Astrocyte of the spinal cord (primary cell): ENCODE measurements at regions of chr9 and their contacts with region 1.

Region 1: DNA sequence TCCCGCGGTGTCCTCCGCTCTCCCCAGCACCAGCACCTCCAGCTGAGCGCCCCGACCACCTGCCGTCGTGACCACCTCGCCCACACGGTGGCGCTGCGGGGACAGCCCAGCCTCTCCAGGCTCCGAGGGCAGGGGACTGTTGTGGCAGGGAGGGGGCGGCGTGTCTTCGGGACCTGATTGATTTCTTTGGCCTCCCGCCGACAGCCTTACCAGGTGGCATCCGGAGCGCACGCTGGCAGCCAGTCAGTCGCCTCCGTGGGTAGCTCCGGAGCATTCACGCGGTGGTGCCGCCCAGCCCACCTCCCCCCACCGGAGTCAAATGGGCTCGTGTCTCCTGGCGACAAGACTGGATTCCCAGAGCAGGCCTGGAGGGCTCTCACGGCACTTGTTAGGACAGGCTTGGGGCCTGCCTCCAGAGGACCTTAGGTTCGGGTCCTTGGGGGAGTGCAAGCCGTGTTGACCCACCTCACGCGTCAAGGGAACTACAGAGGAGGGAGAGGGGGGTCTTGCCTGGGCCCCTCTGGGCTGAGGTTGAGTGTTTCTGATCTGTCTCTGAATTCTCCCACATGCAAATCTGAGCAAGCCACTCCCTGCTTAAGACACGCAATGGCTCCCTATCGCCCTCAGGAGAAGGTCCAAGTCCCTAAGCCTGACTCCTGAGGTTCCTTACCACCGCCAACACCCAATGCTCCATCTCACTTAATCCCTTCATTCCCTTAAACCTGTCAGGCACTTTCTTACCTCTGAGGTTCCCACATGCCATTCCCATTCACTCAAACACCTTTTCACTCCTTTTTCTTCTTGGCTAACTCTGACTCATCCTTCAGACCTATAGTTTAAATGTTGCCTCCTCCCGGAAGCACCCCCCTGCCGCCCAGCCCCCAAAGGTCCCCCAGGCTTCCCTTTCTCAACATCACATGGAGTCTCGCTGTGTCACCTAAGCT is 51.2 kb upstream of the GGTA1 start:
- DNase-seq: peak; percentile 55
- H3K4me3 ChIP-seq: peak overlapping the region; percentile 18
- CTCF ChIP-seq: peak; percentile 86

Region 2: DNA sequence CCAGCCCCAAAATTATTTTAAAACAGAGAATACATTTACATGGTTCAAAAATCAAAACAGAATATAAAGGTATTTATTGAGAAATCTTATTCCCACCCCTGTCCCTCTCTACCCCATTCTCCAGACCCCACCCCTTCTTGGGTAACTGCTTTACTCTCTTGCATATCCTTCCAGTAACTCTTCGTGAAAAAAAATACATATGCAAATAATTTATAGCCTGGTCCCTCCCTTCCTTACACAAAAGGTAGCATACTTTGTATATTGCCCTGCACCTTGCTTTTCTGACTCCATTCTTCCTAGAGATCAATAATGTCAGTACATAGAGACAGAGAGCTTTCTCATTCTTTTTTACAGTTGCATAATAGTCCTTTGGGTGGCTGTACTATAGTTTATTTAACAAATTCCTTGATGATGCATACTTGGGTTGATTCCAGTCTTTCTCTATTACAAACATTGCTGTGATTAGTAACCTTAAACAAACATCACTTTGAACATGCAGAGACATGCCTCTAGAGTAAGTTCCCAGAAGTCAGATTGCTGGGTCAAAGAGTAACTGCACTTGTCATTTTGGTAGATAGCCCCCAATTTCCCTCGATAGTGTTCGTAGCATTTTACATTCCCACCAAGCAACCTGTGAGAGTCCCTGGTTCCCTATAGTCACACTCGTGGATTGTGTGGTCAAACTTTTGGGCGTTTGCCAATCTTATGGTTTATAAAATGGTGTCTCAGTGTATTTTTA is 228.6 kb before region 1 on chr9:
- in situ Hi-C with region 1: no loop called
- DNase-seq: peak; percentile 95
- H3K4me3 ChIP-seq: no peak overlapping the region
- CTCF ChIP-seq: no peak

Region 3: DNA sequence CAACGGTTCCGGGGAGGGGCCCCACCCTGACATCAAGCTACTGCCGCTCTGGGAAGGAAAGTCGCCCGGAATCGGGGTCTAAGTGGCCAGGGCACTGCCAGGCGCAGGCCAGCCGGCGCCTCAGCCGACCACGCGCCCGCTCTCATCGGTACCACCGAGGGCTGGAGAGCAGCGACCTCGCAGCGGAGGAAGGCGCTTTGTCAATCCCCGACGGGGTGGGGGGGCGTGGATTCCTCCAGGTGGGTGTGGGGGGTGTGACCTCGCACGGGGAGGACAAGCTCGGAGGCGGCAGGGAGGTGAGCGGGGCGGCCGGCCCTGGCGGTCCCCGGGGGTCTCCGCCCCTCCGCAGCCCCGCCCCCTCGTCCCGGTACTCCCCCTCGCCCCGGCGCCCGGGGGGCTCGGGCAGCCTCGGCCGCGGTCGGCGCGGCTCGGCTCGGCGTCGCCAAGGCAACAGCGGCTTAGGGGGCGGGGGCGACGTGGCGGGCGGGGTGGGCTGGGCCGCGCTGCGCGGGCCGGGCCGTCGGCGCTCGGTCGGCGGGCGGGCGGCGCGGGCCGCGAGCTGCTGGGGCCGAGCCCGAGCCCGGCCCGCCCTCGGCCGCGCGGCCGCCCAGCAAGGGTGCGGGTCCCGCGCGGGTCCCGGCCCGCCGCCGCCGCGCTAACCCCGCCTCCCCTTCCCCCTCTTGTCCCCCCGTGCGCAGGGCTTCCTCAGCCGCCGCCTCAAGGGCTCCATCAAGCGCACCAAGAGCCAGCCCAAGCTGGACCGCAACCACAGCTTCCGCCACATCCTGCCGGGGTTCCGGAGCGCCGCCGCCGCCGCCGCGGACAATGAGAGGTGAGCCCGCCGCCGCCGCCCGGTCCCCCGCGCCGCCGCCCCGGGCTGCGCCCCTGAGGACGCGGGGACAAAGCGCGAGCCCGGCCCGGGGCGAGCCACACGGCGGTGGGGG is 148.1 kb after region 1 on chr9:
- in situ Hi-C with region 1: loop called (anchors 10 kb)
- DNase-seq: peak; percentile 52
- H3K4me3 ChIP-seq: peak overlapping the region; percentile 65
- CTCF ChIP-seq: no peak